ENCODE measurements at regions of chr5 and their contacts with region 1.

Region 1: GRCh38 chr5:74945561-74946165 is 79.5 kb upstream of the FAM169A start:
- DNase-seq: peak in 1 of 9 experiments; percentile 10
- ATAC-seq: no peak
- H3K4me3 ChIP-seq: no peak overlapping the region
- H3K4me3 Mint-ChIP-seq: no peak overlapping the region
- H3K27ac ChIP-seq: no peak overlapping the region
- H3K27ac Mint-ChIP-seq: no peak overlapping the region
- H3K4me1 ChIP-seq: no peaks in the 10 kb centered on the region
- H3K4me1 Mint-ChIP-seq: peaks cover 5% of the 10 kb centered on the region
- H3K27me3 ChIP-seq: no peaks in the 10 kb centered on the region
- H3K27me3 Mint-ChIP-seq: peaks cover 2% of the 10 kb centered on the region
- CTCF ChIP-seq: no peak

Region 2: DNA sequence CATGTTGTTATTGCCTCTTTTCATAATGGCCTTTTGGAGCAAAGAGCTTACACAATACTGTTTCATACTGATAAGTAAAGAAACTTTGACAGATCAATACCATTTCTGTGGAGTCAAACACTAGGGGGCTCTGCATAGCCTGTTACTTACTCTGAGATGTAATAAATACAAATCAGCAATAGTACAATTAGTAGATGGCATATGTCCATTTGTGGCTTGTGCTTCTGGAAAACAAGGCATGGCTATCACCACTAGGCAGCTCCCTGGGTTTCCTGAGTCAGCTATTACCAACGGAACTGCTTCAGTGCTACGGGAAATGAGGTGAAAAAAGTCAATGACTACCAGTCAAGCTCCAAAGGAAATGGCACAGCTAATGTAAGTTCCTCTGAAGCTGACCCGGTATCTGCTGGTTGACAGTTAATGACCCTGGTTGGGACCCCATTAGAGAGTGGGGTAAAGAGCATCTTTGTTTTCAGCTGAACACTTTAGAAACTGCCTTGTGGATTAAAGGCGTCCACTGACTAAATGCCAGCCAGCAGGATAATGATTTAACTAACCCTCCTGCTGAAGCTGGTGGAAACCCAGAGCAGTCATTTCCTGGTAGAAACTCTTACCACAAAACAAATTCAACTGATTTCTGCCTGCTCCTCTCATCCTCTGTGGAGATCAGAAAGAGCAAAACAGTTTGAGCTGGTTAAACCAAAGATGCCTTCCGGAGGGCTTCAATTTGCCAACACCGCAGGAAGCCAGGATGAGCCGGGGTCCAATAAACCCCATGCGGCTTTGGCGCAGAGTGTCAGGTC is 10.5 kb before region 1 on chr5:
- CTCF ChIA-PET with region 1: interaction called, 17 read pairs
- POLR2A ChIA-PET with region 1: no interaction called
- intact Hi-C with region 1: no loop called
- DNase-seq: peak in 7 of 9 experiments; percentile 7 to 60 (median 21)
- ATAC-seq: peak; percentile 71
- H3K4me3 ChIP-seq: peak overlapping the region; percentile 5 to 7
- H3K4me3 Mint-ChIP-seq: peak overlapping the region; percentile 73
- H3K27ac ChIP-seq: peak overlapping the region in 1 of 2 experiments; percentile 44
- H3K27ac Mint-ChIP-seq: peak overlapping the region; percentile 83
- H3K4me1 ChIP-seq: peaks cover 19% of the 10 kb centered on the region
- H3K4me1 Mint-ChIP-seq: peaks cover 26% of the 10 kb centered on the region
- H3K27me3 ChIP-seq: peaks cover 0 to 2% of the 10 kb centered on the region in 2 experiments
- H3K27me3 Mint-ChIP-seq: no peaks in the 10 kb centered on the region
- CTCF ChIP-seq: no peak

Measured in CD8-positive, alpha-beta T cell (primary cell).